ENCODE measurements at regions of chr12 and their contacts with region 1.

Region 1: GRCh38 chr12:15882118-15882971 is at the start of gene STRAP:
- DNase-seq: peak; percentile 94
- H3K4me3 Mint-ChIP-seq: peak within 1 kb of the TSS; percentile 97
- H3K27ac Mint-ChIP-seq: peak within 1 kb of the TSS; percentile 99
- H3K4me1 Mint-ChIP-seq: peaks cover 59% of the 10 kb centered on the region
- H3K27me3 Mint-ChIP-seq: no peaks in the 10 kb centered on the region
- total RNA-seq, gene STRAP: 147 and 156 TPM in 2 replicates

Region 2: DNA sequence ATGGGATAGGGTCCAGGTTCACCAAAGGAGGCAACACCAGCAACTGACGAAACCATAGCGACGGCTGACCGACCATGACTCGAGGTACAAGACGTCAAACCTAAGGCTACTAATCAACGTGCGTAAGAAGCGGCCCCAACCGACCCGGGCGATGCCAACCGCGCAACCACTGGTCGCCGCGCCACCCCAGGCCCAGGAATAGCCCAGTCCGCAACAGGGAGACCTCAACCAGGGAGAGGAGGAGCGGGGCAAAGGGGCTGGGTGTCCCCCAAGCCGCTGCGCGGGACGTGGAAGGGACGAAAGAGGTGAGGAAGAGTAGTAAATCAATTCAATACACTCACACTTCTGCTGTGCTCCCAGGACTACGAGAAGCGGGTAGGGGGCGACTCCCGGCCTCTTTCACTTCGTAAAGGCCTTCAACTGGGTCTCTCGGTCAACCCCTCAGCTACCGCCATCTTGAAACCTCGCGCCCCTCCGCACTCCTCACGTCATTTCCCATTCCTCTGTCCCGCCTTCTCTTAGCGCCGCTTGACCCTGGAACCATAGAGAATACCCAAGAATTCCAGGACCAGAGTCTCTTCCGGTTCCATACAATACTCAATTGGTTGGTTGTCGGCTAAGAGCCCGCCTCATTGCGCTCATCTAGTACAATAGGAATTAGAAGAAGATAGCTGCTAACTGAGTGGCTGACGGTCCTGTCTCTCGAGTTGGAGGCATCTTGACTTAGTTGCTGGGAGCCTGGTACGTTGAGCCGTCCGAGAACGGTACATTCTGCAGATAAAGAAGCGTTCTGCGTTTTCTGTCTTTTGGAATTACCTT is 1079.1 kb before region 1 on chr12 and contains the starts of genes C12orf60 and WBP11:
- intact Hi-C with region 1: loop called (anchors 2 kb)
- DNase-seq: peak; percentile 84
- H3K4me3 Mint-ChIP-seq: no peak within 1 kb of the TSS
- H3K27ac Mint-ChIP-seq: no peak within 1 kb of the TSS
- H3K4me1 Mint-ChIP-seq: peaks cover 22% of the 10 kb centered on the region
- H3K27me3 Mint-ChIP-seq: no peaks in the 10 kb centered on the region
- total RNA-seq, gene C12orf60: 2.1 and 2.2 TPM in 2 replicates
- total RNA-seq, gene WBP11: 128 and 142 TPM in 2 replicates

Region 3: GRCh38 chr12:15532364-15532977 is 349.9 kb before region 1 on chr12:
- intact Hi-C with region 1: loop called (anchors 2 kb)
- DNase-seq: peak; percentile 50
- H3K4me3 Mint-ChIP-seq: no peak overlapping the region
- H3K27ac Mint-ChIP-seq: no peak overlapping the region
- H3K4me1 Mint-ChIP-seq: peaks cover 14% of the 10 kb centered on the region
- H3K27me3 Mint-ChIP-seq: peaks cover 10% of the 10 kb centered on the region

Region 4: DNA sequence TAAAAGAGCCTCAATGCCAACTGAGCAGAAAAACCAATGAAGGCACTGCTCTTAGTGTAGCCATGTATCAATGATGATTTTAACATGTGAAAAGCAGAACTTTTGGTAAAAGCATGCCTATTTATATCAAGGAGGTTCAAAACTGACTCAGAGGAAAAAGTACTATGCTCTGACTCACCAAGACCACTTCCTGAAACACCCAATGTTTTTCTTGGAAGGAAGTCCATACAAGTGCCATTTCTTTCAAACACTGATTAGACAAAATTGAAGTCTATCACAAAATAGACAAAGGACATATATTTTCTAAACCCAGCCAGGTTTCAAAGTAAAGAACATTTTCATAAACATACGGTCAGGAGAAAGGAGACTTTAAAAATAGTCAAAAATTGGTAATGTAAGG is 181.8 kb before region 1 on chr12:
- intact Hi-C with region 1: loop called (anchors 2 kb)
- DNase-seq: peak; percentile 14
- H3K4me3 Mint-ChIP-seq: peak overlapping the region; percentile 75
- H3K27ac Mint-ChIP-seq: peak overlapping the region; percentile 88
- H3K4me1 Mint-ChIP-seq: peaks cover 40% of the 10 kb centered on the region
- H3K27me3 Mint-ChIP-seq: no peaks in the 10 kb centered on the region

Region 5: GRCh38 chr12:15856097-15856982 is 26.0 kb before region 1 on chr12:
- intact Hi-C with region 1: loop called (anchors 2 kb)
- DNase-seq: peak; percentile 17
- H3K4me3 Mint-ChIP-seq: no peak overlapping the region
- H3K27ac Mint-ChIP-seq: no peak overlapping the region
- H3K4me1 Mint-ChIP-seq: no peaks in the 10 kb centered on the region
- H3K27me3 Mint-ChIP-seq: peaks cover 16% of the 10 kb centered on the region

Region 6: DNA sequence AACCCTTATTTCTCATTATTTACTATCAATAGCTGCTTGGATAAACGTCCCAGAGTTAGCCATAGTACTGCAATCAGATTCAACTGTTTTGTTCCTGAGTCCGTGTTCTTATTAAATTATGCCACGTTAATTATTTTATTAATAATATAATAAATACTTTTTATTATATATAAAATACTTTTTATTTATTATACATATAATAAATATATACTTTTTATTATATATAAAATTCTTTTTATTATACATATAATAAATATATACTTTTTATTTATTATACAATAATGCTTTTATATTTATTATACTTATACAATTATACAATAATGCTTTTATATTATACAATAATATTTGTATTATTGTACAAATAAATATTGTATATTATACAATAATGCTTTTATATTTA is 10.9 kb after region 1 on chr12:
- intact Hi-C with region 1: no loop called
- DNase-seq: no peak
- H3K4me3 Mint-ChIP-seq: no peak overlapping the region
- H3K27ac Mint-ChIP-seq: no peak overlapping the region
- H3K4me1 Mint-ChIP-seq: peaks cover 16% of the 10 kb centered on the region
- H3K27me3 Mint-ChIP-seq: no peaks in the 10 kb centered on the region

Region 7: DNA sequence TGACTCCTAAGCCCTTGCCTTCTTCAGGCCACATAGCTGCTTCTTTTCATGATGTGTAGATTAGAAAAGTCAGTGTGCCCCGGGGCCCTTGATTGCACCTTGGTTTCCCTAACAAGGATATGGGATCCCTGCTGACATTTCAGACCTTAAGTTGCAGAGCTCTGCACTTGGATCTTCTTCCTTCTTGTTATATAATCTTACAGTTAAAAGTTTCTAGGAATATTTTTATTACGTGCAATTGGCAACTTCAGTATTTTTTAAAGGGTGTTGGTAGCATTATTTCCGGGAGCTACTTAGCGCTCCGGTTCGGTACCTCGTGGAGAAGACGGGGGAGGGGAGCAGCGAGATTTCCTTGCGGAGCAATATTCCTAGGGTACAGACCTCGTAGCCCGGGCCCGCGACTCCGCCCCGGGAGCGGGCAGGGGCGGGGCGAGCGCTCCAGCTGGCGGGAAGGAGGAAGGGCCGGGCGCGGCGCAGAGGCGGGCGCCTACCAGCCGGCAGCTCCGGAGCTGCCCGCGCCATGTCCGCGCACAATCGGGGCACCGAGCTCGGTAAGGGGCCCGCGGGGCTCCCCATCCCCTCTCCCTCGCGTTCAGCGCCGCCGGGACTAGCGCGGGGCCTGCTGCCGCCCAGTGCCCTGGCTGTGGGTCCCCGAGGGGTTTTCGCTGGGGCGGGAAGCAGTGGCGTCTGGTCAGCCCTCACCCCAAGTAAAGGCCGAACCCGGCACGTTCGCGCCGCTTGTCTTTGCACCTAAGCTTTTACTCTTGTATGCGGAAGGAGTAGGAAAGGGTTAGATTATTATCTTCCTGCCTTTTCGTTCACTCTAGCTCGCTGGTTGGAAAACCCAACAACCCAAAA is 28.7 kb after region 1 on chr12 and contains the start of gene DERA:
- intact Hi-C with region 1: loop called (anchors 1 kb)
- DNase-seq: peak; percentile 54
- H3K4me3 Mint-ChIP-seq: peak within 1 kb of the TSS; percentile 87
- H3K27ac Mint-ChIP-seq: peak within 1 kb of the TSS; percentile 90
- H3K4me1 Mint-ChIP-seq: peaks cover 25% of the 10 kb centered on the region
- H3K27me3 Mint-ChIP-seq: no peaks in the 10 kb centered on the region
- total RNA-seq, gene DERA: 15.3 and 17.1 TPM in 2 replicates

Region 8: DNA sequence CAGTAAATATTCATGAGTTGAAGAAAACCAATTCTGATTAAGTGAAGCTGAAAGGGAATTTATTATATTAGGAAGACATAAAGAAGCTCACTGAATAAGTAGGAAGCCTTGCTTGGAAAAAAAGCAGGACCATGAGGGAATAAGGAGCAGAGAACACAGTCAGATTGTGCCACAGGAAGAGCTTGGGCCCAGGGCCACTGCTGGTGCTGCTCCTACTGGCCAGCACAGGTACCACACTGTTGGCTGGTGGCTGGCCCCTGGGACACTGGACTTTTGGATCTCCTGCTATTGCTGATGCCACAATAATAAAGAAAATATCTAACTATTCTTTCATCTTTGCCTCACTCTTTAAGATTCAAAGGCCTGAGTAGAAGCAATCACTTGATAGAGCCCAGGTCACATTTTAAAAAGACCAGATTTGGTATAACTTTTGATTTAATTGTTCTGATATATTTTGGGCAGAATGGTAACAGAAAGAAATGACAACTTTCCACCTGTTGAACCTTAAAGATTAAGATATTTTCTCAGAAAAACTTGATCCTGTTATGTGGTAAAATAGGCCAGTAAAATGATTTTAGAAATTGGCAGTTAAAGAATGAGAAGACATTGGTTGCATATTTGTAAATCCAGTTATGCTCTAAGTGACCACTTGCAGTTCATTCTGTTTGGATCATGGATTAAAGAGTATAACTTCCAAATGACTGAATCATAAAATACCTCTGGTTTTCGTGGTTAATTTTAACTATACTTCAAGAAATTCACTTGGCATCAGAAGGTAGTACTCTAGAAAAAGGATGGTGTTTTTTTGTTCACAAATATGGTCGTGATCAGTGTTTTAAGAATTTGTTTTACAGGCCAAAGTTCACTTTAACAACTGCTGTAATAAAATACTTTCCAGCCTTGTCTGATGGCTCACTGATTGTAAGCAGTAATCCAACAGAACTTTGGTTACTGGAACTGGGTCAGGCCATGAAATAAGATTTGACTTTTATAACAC is 97.0 kb after region 1 on chr12:
- intact Hi-C with region 1: no loop called
- DNase-seq: no peak
- H3K4me3 Mint-ChIP-seq: no peak overlapping the region
- H3K27ac Mint-ChIP-seq: no peak overlapping the region
- H3K4me1 Mint-ChIP-seq: no peaks in the 10 kb centered on the region
- H3K27me3 Mint-ChIP-seq: no peaks in the 10 kb centered on the region